Esophagus muscularis mucosa (tissue), 4 donors: ENCODE measurements at regions of chr16 and their contacts with region 1.

Region 1: GRCh38 chr16:71808593-71809459 is at the start of gene AP1G1:
- DNase-seq: peak; percentile 98
- H3K4me3 ChIP-seq: peak within 1 kb of the TSS; percentile 85 to 99 (median 95)
- H3K27ac ChIP-seq: peak within 1 kb of the TSS; percentile 98 to 100 (median 98)
- H3K4me1 ChIP-seq: peaks cover 32 to 49% (median 46%) of the 10 kb centered on the region in 4 donors
- H3K27me3 ChIP-seq: no peaks in the 10 kb centered on the region
- CTCF ChIP-seq: no peak
- EP300 ChIP-seq: no peak
- POLR2A ChIP-seq: peak; percentile 21
- total RNA-seq, gene AP1G1: 45.9 to 56.9 (median 51.5) TPM

Region 2: DNA sequence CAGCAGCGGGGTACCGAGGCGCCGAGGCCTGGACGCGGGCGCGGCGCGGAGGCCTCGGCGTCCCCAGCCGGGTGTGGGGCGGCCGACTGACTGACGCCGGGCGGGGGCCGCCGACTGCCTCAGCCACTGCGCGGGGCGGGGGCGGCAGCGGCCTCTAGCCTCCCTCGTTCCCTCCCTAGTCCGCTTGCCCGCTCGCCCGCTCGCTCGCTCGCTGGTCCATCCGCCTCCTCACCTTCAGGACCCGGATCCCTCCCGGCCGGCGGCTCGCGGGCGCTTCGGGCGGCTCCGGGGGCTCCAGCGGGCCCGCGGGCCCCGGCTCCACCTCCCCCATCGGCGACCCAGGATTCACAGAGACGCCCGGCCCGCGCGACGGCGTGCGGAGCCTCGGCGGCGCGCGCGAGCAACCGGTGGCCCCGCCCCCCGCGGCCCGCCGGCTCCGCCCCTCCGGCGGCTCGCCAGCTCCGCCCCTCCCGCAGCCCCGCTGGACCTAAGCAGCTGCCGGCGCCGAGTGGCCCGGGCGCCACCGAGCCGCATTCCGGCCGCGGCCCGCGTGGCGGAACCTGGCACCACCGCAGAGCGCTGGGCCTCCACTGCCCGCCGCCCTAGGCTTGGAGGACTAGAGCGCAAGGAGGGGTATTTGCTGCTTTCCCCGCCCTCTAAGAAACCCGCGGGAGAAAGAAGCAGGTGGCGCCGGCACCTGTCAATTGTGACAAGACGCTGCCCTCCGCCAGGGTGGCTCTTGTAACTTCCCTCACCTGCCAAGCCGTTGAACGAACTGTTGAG is 85.1 kb before region 1 on chr16:
- intact Hi-C with region 1: loop called (anchors 5 kb)
- DNase-seq: no peak
- H3K4me3 ChIP-seq: peak overlapping the region; percentile 79 to 97 (median 88)
- H3K27ac ChIP-seq: peak overlapping the region; percentile 93 to 95 (median 94)
- H3K4me1 ChIP-seq: peaks cover 20 to 55% (median 50%) of the 10 kb centered on the region in 4 donors
- H3K27me3 ChIP-seq: no peaks in the 10 kb centered on the region
- CTCF ChIP-seq: no peak
- EP300 ChIP-seq: no peak
- POLR2A ChIP-seq: no peak

Region 3: GRCh38 chr16:71781741-71782140 is 27.1 kb before region 1 on chr16:
- intact Hi-C with region 1: no loop called
- DNase-seq: no peak
- H3K4me3 ChIP-seq: no peak overlapping the region
- H3K27ac ChIP-seq: no peak overlapping the region
- H3K4me1 ChIP-seq: peaks cover 10 to 46% (median 25%) of the 10 kb centered on the region in 4 donors
- H3K27me3 ChIP-seq: no peaks in the 10 kb centered on the region
- CTCF ChIP-seq: no peak
- EP300 ChIP-seq: no peak
- POLR2A ChIP-seq: no peak

Region 4: DNA sequence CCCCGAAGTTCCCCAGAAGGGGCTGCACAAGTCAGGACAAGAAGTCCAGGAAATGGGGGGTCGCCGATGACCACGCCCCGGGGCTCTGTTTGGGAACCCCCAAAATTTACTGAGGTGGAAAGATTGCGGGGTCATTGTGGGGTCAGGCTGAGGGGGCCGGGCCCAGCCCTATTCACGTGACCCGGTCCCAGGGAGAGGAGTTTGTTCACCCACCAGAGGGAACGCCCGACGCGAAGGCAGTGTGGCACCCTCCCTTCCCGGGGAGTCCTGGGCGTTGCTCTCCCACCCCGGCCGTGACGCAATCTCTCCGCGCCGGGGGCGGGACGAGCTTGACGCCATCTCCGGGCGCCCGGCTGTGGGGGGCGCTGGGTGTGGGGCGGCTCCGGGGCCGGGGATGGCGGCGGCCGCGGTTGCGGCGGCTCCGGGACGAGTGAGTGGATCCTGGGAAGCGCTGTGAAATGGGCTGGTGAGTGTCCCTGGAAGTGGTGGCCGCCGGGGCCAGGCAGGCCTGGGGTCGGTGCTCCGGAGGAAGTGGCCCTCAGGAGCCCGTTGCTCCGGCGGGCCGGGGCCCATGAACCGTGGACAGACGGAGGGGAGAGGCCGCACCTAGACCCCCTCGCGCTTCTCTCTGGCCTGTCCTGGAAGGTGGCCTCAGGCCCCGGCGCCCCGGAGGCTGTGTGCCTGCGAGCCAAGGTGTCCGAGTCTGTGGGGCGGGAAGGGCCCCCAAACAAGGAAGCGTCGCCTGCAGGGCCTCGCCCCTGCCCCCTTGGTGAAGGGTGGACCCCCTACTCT is 37.0 kb after region 1 on chr16 and contains the start of gene ATXN1L:
- intact Hi-C with region 1: loop called (anchors 2 kb)
- DNase-seq: peak; percentile 95
- H3K4me3 ChIP-seq: peak within 1 kb of the TSS; percentile 94 to 100 (median 98)
- H3K27ac ChIP-seq: peak within 1 kb of the TSS; percentile 82 to 94 (median 90)
- H3K4me1 ChIP-seq: peaks cover 18 to 22% (median 20%) of the 10 kb centered on the region in 4 donors
- H3K27me3 ChIP-seq: no peaks in the 10 kb centered on the region
- CTCF ChIP-seq: peak; percentile 5 to 32 (median 16)
- EP300 ChIP-seq: no peak
- POLR2A ChIP-seq: peak; percentile 85
- total RNA-seq, gene ATXN1L: 32.8 to 54.6 (median 42.9) TPM

Region 5: GRCh38 chr16:71883849-71884638 is 75.2 kb after region 1 on chr16 and contains the start of gene ZNF821:
- intact Hi-C with region 1: loop called (anchors 2 kb)
- DNase-seq: no peak
- H3K4me3 ChIP-seq: peak within 1 kb of the TSS; percentile 79 to 97 (median 92)
- H3K27ac ChIP-seq: peak within 1 kb of the TSS; percentile 85 to 95 (median 91)
- H3K4me1 ChIP-seq: peaks cover 11 to 27% (median 25%) of the 10 kb centered on the region in 4 donors
- H3K27me3 ChIP-seq: no peaks in the 10 kb centered on the region
- CTCF ChIP-seq: peak; percentile 43 to 53 (median 51)
- EP300 ChIP-seq: no peak
- POLR2A ChIP-seq: no peak
- total RNA-seq, gene ZNF821: 2.1 to 6.5 (median 5.9) TPM

Region 6: GRCh38 chr16:71894921-71895678 is 86.3 kb after region 1 on chr16 and contains the start of gene IST1:
- intact Hi-C with region 1: loop called (anchors 5 kb)
- DNase-seq: peak; percentile 99
- H3K4me3 ChIP-seq: peak within 1 kb of the TSS; percentile 80 to 94 (median 90)
- H3K27ac ChIP-seq: peak within 1 kb of the TSS; percentile 91 to 99 (median 96)
- H3K4me1 ChIP-seq: peaks cover 39 to 47% (median 46%) of the 10 kb centered on the region in 4 donors
- H3K27me3 ChIP-seq: no peaks in the 10 kb centered on the region
- CTCF ChIP-seq: peak in 1 of 3 experiments; percentile 1
- EP300 ChIP-seq: no peak
- POLR2A ChIP-seq: peak; percentile 56
- total RNA-seq, gene IST1: 132 to 186 (median 166) TPM

Region 7: DNA sequence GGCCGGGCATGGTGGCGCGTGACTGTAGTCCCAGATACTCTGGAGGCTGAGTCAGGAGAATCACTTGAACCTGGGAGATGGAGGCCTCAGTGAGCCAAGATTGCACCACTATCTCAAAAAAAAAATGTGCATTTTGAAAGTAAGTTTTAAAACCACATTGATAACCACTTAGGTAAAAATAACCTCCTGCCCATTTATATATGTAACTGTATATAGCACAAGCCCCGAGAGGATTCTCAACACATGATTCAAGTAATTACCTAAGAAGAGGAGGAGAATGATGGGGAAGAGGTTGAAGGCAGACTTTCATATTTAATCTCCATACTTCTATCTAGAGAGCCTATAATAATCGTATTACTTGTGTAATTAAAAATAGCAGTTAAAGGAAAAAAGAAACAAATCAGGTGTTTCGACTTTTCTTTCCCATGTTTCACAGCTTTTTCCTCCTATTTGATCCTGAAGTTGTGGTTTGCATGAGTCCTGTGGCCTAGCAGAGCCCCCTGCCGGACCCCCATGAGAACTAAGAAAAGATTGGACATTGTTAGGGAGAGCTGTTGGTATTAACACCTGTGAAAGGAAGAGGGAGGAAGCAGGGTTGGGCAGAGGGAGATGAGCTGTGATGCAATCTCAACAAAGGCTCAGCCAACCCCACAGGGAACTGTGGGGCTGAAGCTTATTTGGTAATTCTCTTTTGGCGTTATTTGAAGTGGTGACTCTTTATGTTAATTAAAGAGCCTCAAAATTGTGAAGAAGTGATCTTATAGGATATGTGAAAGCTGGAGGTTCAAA is 341.0 kb after region 1 on chr16:
- intact Hi-C with region 1: no loop called
- DNase-seq: no peak
- H3K4me3 ChIP-seq: no peak overlapping the region
- H3K27ac ChIP-seq: no peak overlapping the region
- H3K4me1 ChIP-seq: no peaks in the 10 kb centered on the region
- H3K27me3 ChIP-seq: no peaks in the 10 kb centered on the region
- CTCF ChIP-seq: no peak
- EP300 ChIP-seq: no peak
- POLR2A ChIP-seq: no peak